Activated CD8-positive, alpha-beta T cell treated with anti-CD3 and anti-CD28 coated beads for 36 hours (primary cell): ENCODE measurements at regions of chr11 and their contacts with region 1.

Region 1: GRCh38 chr11:122628810-122629555 is 26.5 kb upstream of the UBASH3B start:
- DNase-seq: peak; percentile 83
- ATAC-seq: peak; percentile 96
- H3K4me3 Mint-ChIP-seq: no peak overlapping the region
- H3K27ac Mint-ChIP-seq: no peak overlapping the region
- H3K4me1 Mint-ChIP-seq: peaks cover 14% of the 10 kb centered on the region
- H3K27me3 Mint-ChIP-seq: no peaks in the 10 kb centered on the region
- CTCF ChIP-seq: peak; percentile 86

Region 2: GRCh38 chr11:122578168-122578825 is 50.7 kb before region 1 on chr11:
- CTCF ChIA-PET with region 1: interaction called, 15 read pairs
- POLR2A ChIA-PET with region 1: no interaction called
- intact Hi-C with region 1: no loop called
- DNase-seq: peak; percentile 19
- ATAC-seq: no peak
- H3K4me3 Mint-ChIP-seq: no peak overlapping the region
- H3K27ac Mint-ChIP-seq: no peak overlapping the region
- H3K4me1 Mint-ChIP-seq: peaks cover 10% of the 10 kb centered on the region
- H3K27me3 Mint-ChIP-seq: peaks cover 1% of the 10 kb centered on the region
- CTCF ChIP-seq: no peak

Region 3: DNA sequence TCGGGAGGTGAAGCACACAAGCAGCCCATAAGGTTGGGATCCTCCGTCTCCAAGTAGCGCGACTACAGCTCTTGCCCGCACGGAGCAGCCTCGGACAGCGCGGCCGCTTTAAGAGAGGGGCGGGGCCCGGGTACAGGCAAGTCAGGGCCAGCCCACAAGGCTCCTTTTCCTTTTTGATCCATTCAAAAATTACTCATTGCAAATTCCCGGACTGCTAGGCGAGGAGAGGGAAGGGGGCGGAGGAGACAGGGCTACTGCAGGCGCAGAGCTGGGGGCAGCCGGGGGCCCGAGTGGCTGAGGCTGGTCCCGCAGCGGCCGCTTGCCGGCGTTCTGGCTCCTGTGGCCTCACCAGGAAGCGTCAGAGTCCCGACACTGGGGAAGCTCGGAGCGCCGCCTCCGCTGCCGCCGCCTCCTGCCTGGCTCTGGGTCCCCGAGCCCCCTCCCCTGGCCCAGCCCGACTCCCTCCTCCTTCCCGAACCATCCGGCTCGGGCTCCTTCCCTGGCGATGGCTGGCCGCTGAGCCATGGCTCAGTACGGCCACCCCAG is 26.6 kb after region 1 on chr11 and contains the start of gene UBASH3B:
- CTCF ChIA-PET with region 1: interaction called, 13 read pairs
- POLR2A ChIA-PET with region 1: no interaction called
- intact Hi-C with region 1: no loop called
- DNase-seq: peak; percentile 76
- ATAC-seq: peak; percentile 75
- H3K4me3 Mint-ChIP-seq: peak within 1 kb of the TSS; percentile 97
- H3K27ac Mint-ChIP-seq: peak within 1 kb of the TSS; percentile 91
- H3K4me1 Mint-ChIP-seq: peaks cover 31% of the 10 kb centered on the region
- H3K27me3 Mint-ChIP-seq: no peaks in the 10 kb centered on the region
- CTCF ChIP-seq: peak; percentile 11
- total RNA-seq, gene UBASH3B: 36.1 to 40.6 TPM

Region 4: DNA sequence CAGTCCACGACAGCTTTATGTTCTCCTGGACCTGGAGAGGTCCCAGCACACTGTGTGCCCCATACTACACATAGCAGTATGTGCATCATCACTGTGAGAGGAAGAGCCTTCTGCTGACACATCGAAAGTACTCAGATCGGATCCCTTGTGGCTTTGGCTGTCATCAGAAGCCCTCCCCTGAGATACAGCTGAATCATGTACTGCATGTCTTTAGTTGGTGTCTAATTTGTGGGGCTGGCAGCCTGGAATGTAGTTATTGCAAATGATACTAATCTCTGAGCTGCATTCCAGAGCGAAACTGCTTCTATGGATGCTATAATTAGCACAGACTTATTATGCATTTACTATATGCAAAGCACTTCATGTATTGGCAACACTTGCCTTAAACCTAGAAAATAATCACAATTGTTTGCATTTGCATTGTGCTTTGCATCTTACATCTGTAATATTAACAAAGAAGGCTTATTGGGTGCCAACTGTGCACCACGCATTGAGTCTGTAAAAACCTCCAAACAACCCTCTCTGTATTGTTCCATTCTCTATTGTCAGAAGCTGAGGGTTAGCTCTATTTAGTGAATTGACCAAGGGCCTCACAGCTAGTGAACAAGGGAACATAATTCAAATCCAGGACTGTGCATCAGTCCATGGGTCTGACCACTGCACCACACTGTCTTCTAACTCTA is 120.2 kb after region 1 on chr11:
- CTCF ChIA-PET with region 1: interaction called, 149 read pairs
- POLR2A ChIA-PET with region 1: no interaction called
- intact Hi-C with region 1: no loop called
- DNase-seq: peak; percentile 83
- ATAC-seq: peak; percentile 73
- H3K4me3 Mint-ChIP-seq: no peak overlapping the region
- H3K27ac Mint-ChIP-seq: no peak overlapping the region
- H3K4me1 Mint-ChIP-seq: peaks cover 30% of the 10 kb centered on the region
- H3K27me3 Mint-ChIP-seq: no peaks in the 10 kb centered on the region
- CTCF ChIP-seq: no peak

Region 5: GRCh38 chr11:122772945-122773344 is 144.0 kb after region 1 on chr11:
- CTCF ChIA-PET with region 1: interaction called, 12 read pairs
- POLR2A ChIA-PET with region 1: interaction called, 3 read pairs
- intact Hi-C with region 1: no loop called
- DNase-seq: no peak
- ATAC-seq: no peak
- H3K4me3 Mint-ChIP-seq: no peak overlapping the region
- H3K27ac Mint-ChIP-seq: no peak overlapping the region
- H3K4me1 Mint-ChIP-seq: peaks cover 43% of the 10 kb centered on the region
- H3K27me3 Mint-ChIP-seq: no peaks in the 10 kb centered on the region
- CTCF ChIP-seq: no peak

Region 6: GRCh38 chr11:122781378-122782195 is 152.6 kb after region 1 on chr11:
- CTCF ChIA-PET with region 1: interaction called, 99 read pairs
- POLR2A ChIA-PET with region 1: no interaction called
- intact Hi-C with region 1: loop called (anchors 2 kb)
- DNase-seq: peak; percentile 85
- ATAC-seq: peak; percentile 88
- H3K4me3 Mint-ChIP-seq: no peak overlapping the region
- H3K27ac Mint-ChIP-seq: no peak overlapping the region
- H3K4me1 Mint-ChIP-seq: peaks cover 19% of the 10 kb centered on the region
- H3K27me3 Mint-ChIP-seq: no peaks in the 10 kb centered on the region
- CTCF ChIP-seq: peak; percentile 92

Region 7: GRCh38 chr11:122788781-122789535 is 160.0 kb after region 1 on chr11:
- CTCF ChIA-PET with region 1: interaction called, 99 read pairs
- POLR2A ChIA-PET with region 1: no interaction called
- intact Hi-C with region 1: no loop called
- DNase-seq: no peak
- ATAC-seq: no peak
- H3K4me3 Mint-ChIP-seq: no peak overlapping the region
- H3K27ac Mint-ChIP-seq: no peak overlapping the region
- H3K4me1 Mint-ChIP-seq: no peaks in the 10 kb centered on the region
- H3K27me3 Mint-ChIP-seq: no peaks in the 10 kb centered on the region
- CTCF ChIP-seq: peak; percentile 42

Region 8: GRCh38 chr11:122951211-122951610 is 322.2 kb after region 1 on chr11:
- CTCF ChIA-PET with region 1: no interaction called
- POLR2A ChIA-PET with region 1: no interaction called
- intact Hi-C with region 1: no loop called
- DNase-seq: no peak
- ATAC-seq: no peak
- H3K4me3 Mint-ChIP-seq: no peak overlapping the region
- H3K27ac Mint-ChIP-seq: no peak overlapping the region
- H3K4me1 Mint-ChIP-seq: peaks cover 4% of the 10 kb centered on the region
- H3K27me3 Mint-ChIP-seq: no peaks in the 10 kb centered on the region
- CTCF ChIP-seq: no peak